GM13977 (cell line): ENCODE measurements at regions of chr11 and their contacts with region 1.

Region 1: DNA sequence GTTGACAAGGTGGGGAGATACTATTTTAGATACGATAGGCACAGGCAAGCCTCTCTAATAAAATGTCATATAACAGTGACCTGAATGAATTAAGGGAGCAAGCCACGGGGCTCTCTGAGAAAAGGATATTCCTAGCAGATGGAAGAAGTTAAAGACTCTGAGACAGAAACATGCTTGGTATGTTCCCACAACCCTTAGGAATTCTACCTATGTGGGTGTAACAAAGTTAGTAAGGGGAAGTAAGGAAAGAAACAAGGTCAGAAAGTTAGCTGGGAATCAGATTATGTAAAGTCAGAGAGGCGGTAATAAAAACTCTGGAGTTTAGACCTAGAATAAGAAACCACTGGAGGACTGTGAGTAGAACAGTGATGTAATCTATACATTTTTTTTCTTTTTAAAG is 59.7 kb upstream of the GDPD4 start:
- DNase-seq: no peak
- CTCF ChIP-seq: no peak

Region 2: DNA sequence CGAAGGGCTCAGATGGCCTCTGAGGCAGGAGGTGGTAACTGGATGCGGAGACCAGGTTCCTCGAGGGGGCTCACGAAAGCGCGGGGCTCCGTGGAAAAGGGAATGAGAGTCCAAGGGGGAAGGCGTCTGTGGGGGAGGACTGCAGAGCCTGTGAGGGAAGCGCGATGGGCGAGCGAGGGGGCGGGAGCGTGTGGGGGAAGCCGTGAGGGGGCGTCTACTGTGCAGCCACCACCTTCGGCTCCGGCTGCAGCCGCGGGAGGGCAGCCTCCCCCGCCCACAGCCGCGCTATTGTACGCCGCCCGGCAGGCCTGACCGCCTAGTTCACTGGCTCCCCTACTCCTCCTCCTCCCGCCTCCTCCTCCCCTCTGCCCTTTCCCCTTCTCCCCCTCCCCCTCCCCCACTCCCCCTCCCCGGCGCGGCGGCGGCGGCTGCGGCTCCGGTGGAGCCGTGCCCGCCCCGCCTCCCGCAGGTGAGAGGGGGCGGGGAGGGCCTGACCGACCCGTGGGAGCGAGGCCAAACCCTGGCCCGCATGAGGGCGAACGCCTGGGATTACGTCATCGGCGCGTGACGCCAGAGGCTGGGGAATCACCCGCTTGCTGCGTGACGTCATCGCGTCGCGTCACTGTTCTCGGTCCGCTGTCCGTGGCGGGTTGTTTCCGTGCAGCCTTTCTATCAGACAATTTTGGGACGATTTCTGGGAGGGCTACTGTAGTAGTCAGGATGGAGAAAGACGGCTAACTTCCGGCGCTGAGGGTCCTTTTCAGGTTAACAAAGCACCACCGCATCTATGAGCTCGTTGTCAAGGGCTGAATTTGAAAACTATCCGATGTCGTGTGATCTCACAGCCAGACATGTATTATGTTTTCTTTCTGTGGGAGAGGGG is 112.9 kb after region 1 on chr11 and contains the start of gene PAK1:
- in situ Hi-C with region 1: loop called (anchors 25 kb)
- DNase-seq: peak; percentile 93
- CTCF ChIP-seq: peak; percentile 43